H1 (cell line): ENCODE measurements at regions of chr7 and their contacts with region 1.

Region 1: DNA sequence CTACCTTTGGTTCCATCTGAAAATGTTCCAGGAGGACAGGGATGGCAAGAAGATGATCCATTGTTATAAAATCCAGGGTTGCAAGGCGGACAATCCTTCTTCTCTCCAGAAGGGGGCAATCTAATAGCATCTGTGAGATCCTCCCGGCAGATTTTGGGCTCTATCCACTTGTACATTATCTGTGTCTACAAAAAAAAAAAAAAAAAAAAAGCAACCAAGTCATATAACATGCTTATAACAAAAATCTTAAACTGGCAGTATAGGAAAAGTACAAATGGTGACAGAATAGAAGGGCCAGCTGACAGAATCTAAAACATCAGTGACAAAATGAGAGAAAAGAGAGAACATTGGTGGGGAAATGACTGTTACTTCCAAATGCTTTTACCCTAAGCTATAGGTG is 132.7 kb downstream of the ELAPOR2 start:
- DNase-seq: no peak
- H3K4me3 ChIP-seq: no peak overlapping the region
- H3K27ac ChIP-seq: no peak overlapping the region
- H3K4me1 ChIP-seq: no peaks in the 10 kb centered on the region
- H3K27me3 ChIP-seq: no peaks in the 10 kb centered on the region; a peak in 1 of 7 replicates
- CTCF ChIP-seq: peak; percentile 10 to 72 (median 62)
- EP300 ChIP-seq: no peak
- POLR2A ChIP-seq: no peak
- RAD21 ChIP-seq: peak; percentile 75 to 77

Region 2: DNA sequence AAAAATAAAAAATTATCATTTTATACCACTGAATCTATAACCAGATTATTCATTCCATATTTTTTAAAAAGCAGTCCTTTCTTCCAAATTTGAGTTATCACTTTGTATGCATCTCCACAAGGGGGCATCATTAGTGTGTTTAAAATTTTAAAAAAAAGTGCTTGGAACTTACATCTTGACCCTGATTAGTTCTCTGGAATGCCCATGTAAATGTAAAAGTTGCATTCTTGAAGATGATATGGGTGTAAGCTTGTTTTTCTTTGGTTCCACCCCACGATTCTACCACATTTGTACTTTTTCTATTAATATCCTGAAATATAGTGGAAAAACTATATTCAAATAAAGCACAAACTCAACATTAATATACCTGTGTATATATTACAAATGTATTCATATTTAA is 12.2 kb before region 1 on chr7:
- CTCF ChIA-PET with region 1: interaction called, 20 read pairs
- POLR2A ChIA-PET with region 1: no interaction called
- DNase-seq: no peak
- H3K4me3 ChIP-seq: no peak overlapping the region
- H3K27ac ChIP-seq: no peak overlapping the region
- H3K4me1 ChIP-seq: no peaks in the 10 kb centered on the region
- H3K27me3 ChIP-seq: peaks cover under 1 to 3% (median 2%) of the 10 kb centered on the region in 4 experiments; a peak in 4 of 7 replicates
- CTCF ChIP-seq: peak in 1 of 3 experiments; percentile 39; a peak in 2 of 4 replicates
- EP300 ChIP-seq: no peak
- POLR2A ChIP-seq: no peak
- RAD21 ChIP-seq: peak in 1 of 2 experiments; percentile 28; a peak in 2 of 4 replicates

Region 3: GRCh38 chr7:86942081-86942480 is 15.3 kb after region 1 on chr7:
- CTCF ChIA-PET with region 1: interaction called, 16 read pairs
- POLR2A ChIA-PET with region 1: no interaction called
- DNase-seq: no peak
- H3K4me3 ChIP-seq: no peak overlapping the region
- H3K27ac ChIP-seq: no peak overlapping the region
- H3K4me1 ChIP-seq: 0 out of 7 replicates have a peak, but pooled peaks cover 0 to 2% (median 0%) of the 10 kb centered on the region in 4 experiments
- H3K27me3 ChIP-seq: no peaks in the 10 kb centered on the region
- CTCF ChIP-seq: no peak
- EP300 ChIP-seq: no peak
- POLR2A ChIP-seq: no peak
- RAD21 ChIP-seq: no peak

Region 4: GRCh38 chr7:87046457-87046856 is 119.7 kb after region 1 on chr7:
- CTCF ChIA-PET with region 1: no interaction called
- POLR2A ChIA-PET with region 1: no interaction called
- DNase-seq: no peak
- H3K4me3 ChIP-seq: no peak overlapping the region
- H3K27ac ChIP-seq: no peak overlapping the region
- H3K4me1 ChIP-seq: no peaks in the 10 kb centered on the region
- H3K27me3 ChIP-seq: no peaks in the 10 kb centered on the region
- CTCF ChIP-seq: no peak
- EP300 ChIP-seq: no peak
- POLR2A ChIP-seq: no peak
- RAD21 ChIP-seq: no peak

Region 5: DNA sequence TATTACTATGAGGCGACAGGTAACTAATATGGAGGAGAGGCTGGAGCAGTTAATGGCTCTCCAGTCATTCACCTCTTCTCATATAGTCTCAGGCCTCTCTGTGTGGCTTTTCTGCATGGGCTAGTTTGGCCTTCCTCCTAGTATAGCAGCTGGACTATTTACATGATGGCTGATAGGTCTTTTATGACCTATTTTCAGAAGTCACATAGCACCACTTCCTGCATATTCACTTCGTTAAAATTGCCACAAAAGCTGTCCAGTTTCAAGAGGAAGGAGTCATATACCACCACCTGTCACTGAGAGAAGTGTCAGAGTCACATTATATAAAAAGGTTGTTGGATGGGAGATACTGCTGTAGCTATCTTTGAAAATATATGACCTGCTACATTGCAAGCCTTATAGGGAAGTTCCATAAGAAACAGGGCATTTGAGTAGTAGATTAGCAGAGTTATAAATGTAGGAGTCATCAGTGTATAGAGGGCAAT is 217.5 kb after region 1 on chr7:
- CTCF ChIA-PET with region 1: interaction called, 86 read pairs
- POLR2A ChIA-PET with region 1: interaction called, 4 read pairs
- DNase-seq: no peak
- H3K4me3 ChIP-seq: no peak overlapping the region
- H3K27ac ChIP-seq: no peak overlapping the region
- H3K4me1 ChIP-seq: no peaks in the 10 kb centered on the region
- H3K27me3 ChIP-seq: no peaks in the 10 kb centered on the region
- CTCF ChIP-seq: no peak
- EP300 ChIP-seq: no peak
- POLR2A ChIP-seq: no peak
- RAD21 ChIP-seq: no peak